Endothelial cell of umbilical vein (primary cell): ENCODE measurements at regions of chr3 and their contacts with region 1.

Region 1: DNA sequence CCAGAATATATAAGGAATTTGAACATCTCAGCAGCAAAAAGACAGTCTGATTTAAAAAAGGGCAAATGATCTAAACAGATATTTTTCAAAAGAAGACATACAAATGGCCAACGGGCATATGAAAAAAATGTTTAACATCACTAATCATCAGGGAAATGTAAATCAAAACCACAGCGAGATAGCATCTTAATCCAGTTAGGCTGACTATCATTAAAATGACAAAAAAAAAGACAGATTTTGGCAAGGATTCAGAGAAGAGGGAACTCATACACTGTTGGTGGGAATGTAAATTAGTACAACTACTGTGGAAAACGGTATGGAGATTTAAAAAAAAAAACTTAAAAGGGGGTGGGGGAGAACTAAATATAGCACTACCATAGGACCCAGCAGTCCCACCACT is 47.9 kb downstream of the RNF13 start:
- DNase-seq: no peak
- H3K4me3 ChIP-seq: no peak overlapping the region
- H3K27ac ChIP-seq: no peak overlapping the region
- H3K4me1 ChIP-seq: no peaks in the 10 kb centered on the region
- H3K27me3 ChIP-seq: no peaks in the 10 kb centered on the region
- CTCF ChIP-seq: no peak
- POLR2A ChIP-seq: no peak

Region 2: GRCh38 chr3:149581681-149582370 is 279.1 kb before region 1 on chr3:
- CTCF ChIA-PET with region 1: no interaction called
- POLR2A ChIA-PET with region 1: no interaction called
- dilution Hi-C with region 1: no loop called
- intact Hi-C with region 1: no loop called
- DNase-seq: peak; percentile 84
- H3K4me3 ChIP-seq: no peak overlapping the region
- H3K27ac ChIP-seq: peak overlapping the region; percentile 86
- H3K4me1 ChIP-seq: peaks cover 91% of the 10 kb centered on the region
- H3K27me3 ChIP-seq: no peaks in the 10 kb centered on the region
- CTCF ChIP-seq: no peak
- POLR2A ChIP-seq: no peak

Region 3: DNA sequence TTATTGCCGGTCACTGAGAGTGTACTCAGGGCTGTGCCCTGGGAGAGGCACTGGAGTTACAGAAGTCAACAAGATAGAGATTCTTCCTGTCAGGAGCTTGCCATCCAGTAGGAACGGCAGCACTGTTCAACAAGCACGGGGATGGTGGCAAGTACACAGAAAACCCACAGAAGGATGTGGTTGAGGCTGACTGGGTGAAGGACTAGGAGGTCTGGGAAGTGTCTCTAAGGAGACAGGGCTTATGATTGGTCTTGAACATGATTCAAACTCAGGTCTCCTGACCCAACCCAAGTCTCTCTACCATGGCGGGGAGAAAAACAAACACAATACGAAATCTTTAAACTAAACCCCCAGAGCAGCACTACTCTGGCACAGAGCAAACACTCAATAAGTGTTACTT is 805.3 kb after region 1 on chr3:
- CTCF ChIA-PET with region 1: no interaction called
- POLR2A ChIA-PET with region 1: interaction called, 12 read pairs
- dilution Hi-C with region 1: no loop called
- intact Hi-C with region 1: no loop called
- DNase-seq: no peak
- H3K4me3 ChIP-seq: no peak overlapping the region
- H3K27ac ChIP-seq: no peak overlapping the region
- H3K4me1 ChIP-seq: no peaks in the 10 kb centered on the region
- H3K27me3 ChIP-seq: peaks cover 5 to 10% of the 10 kb centered on the region in 2 experiments
- CTCF ChIP-seq: no peak
- POLR2A ChIP-seq: no peak